ENCODE measurements at regions of chr7 and their contacts with region 1.

Region 1: GRCh38 chr7:101935521-101936141 is 118.2 kb downstream of the CUX1 start:
- DNase-seq: peak; percentile 95 to 98
- ATAC-seq: peak; percentile 87 to 88
- H3K4me3 ChIP-seq: peak overlapping the region; percentile 49 to 58 (median 52)
- H3K27ac ChIP-seq: peak overlapping the region; percentile 88 to 96 (median 95)
- H3K4me1 ChIP-seq: peaks cover 39 to 53% of the 10 kb centered on the region in 2 donors
- H3K27me3 ChIP-seq: no peaks in the 10 kb centered on the region
- CTCF ChIP-seq: no peak
- POLR2A ChIP-seq: peak; percentile 52 to 61

Region 2: GRCh38 chr7:101911800-101912715 is 23.6 kb before region 1 on chr7:
- in situ Hi-C with region 1: no loop called
- intact Hi-C with region 1: loop called (anchors 1 kb)
- DNase-seq: peak; percentile 95 to 96
- ATAC-seq: peak; percentile 89 to 90
- H3K4me3 ChIP-seq: peak overlapping the region in 1 of 4 donors; percentile 20
- H3K27ac ChIP-seq: peak overlapping the region; percentile 92 to 97 (median 93)
- H3K4me1 ChIP-seq: peaks cover 45 to 46% of the 10 kb centered on the region in 2 donors
- H3K27me3 ChIP-seq: no peaks in the 10 kb centered on the region
- CTCF ChIP-seq: peak in 3 of 5 experiments; percentile 19 to 24 (median 23)
- POLR2A ChIP-seq: peak in 1 of 2 donors; percentile 44

Region 3: DNA sequence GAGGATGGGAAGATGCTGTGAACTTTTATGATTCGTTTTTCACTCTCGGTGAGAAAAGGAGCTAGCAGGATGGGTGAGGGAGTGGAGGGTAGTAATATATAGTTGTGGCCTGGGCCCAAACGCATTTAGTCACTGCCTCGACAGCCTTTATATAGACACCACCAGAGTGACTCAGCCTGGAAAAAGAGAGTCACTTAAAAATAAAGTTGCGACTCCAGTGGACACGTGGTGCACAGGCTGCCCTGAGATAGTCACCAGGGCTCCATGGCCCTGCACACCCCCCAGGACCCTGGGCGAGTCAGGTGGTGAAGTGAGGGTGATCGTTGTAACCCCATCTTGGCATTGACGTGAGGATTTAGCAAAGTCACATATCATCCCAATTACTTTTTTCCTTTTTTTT is 11.5 kb before region 1 on chr7:
- in situ Hi-C with region 1: no loop called
- intact Hi-C with region 1: loop called (anchors 1 kb)
- DNase-seq: peak; percentile 72 to 83
- ATAC-seq: peak; percentile 95 to 97
- H3K4me3 ChIP-seq: peak overlapping the region in 1 of 4 donors; percentile 25
- H3K27ac ChIP-seq: peak overlapping the region; percentile 81 to 94 (median 88)
- H3K4me1 ChIP-seq: peaks cover 30 to 39% of the 10 kb centered on the region in 2 donors
- H3K27me3 ChIP-seq: no peaks in the 10 kb centered on the region
- CTCF ChIP-seq: no peak
- POLR2A ChIP-seq: peak; percentile 82 to 86

Region 4: DNA sequence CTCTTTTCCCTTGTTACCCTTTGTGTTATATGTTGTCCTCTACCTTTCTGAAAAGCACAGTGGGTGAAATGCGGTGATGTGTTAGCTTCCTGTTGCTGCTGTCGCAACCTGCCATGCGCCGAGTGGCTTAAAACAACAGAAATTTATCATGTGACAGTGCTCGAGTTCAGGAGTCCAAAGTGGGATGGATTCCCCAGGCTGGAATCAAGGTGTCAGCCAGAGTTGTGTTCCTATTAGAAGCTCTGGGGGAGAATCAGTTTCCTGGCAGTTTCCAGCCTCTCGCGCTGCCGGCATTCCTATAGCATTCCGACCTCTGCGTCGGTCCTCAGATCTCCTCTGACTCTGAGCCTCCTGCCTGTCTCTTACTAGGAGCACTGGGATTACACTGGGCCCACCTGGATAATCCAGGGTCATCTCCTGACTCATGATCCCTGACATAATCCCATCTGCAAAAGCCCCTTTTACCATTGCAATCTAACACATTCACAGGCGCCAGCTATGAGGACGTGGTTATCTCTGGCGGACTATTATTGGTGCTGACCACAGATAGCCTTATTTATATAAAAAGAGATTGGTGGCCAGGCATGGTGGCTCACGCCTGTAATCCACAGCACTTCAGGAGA is 89.2 kb after region 1 on chr7:
- in situ Hi-C with region 1: no loop called
- intact Hi-C with region 1: no loop called
- DNase-seq: no peak
- ATAC-seq: peak; percentile 61 to 76
- H3K4me3 ChIP-seq: no peak overlapping the region
- H3K27ac ChIP-seq: peak overlapping the region; percentile 5 to 36 (median 23)
- H3K4me1 ChIP-seq: peaks cover 10 to 13% of the 10 kb centered on the region in 2 donors
- H3K27me3 ChIP-seq: no peaks in the 10 kb centered on the region
- CTCF ChIP-seq: no peak
- POLR2A ChIP-seq: no peak

Measured in gastrocnemius medialis (tissue), 4 donors.